ENCODE measurements at regions of chr13 and their contacts with region 1.

Region 1: GRCh38 chr13:37602747-37603381 is 4.3 kb upstream of the POSTN start:
- DNase-seq: no peak
- ATAC-seq: peak; percentile 55 to 56
- H3K4me3 ChIP-seq: no peak overlapping the region
- H3K27ac ChIP-seq: no peak overlapping the region
- H3K4me1 ChIP-seq: peaks cover 1% of the 10 kb centered on the region
- H3K27me3 ChIP-seq: no peaks in the 10 kb centered on the region

Region 2: GRCh38 chr13:37074703-37075102 is 528.2 kb before region 1 on chr13:
- intact Hi-C with region 1: loop called in 3 of 4 experiments (anchors 10 kb)
- DNase-seq: no peak
- ATAC-seq: peak in 1 of 2 donors; percentile 55
- H3K4me3 ChIP-seq: no peak overlapping the region
- H3K27ac ChIP-seq: no peak overlapping the region
- H3K4me1 ChIP-seq: no peaks in the 10 kb centered on the region
- H3K27me3 ChIP-seq: no peaks in the 10 kb centered on the region

Region 3: DNA sequence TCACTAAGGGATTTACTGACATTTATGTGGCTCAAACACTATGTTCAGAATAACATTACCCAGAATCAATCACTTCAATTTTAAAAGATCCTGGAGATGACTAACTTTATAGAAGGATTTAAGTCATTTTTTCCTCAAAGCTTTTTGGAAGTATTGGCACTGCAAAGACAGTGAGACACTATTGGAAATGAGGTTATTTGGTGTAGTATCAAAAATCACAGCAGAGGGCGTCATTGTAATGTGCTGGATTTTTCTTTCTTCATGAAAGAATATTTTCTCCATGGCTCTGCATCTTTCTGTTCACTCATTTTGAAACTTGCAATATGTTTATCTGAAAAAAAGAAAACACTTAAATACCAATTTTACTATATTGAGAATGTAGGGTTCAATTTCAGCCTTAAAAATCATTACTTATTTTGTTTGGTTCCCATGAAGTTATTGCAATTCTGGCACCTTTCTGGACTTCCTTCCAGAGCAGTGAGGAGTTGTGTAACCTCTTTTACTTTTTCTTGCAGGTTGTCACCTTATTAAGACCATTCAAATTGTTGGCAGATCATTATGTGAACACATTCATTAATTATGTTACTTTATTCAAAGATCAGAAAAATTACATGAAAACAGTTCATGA is 493.7 kb before region 1 on chr13:
- intact Hi-C with region 1: loop called (anchors 2 to 10 kb)
- DNase-seq: no peak
- ATAC-seq: peak; percentile 65 to 74
- H3K4me3 ChIP-seq: no peak overlapping the region
- H3K27ac ChIP-seq: no peak overlapping the region
- H3K4me1 ChIP-seq: peaks cover 2% of the 10 kb centered on the region
- H3K27me3 ChIP-seq: no peaks in the 10 kb centered on the region

Region 4: GRCh38 chr13:37510441-37510840 is 92.4 kb before region 1 on chr13:
- intact Hi-C with region 1: no loop called
- DNase-seq: no peak
- ATAC-seq: no peak
- H3K4me3 ChIP-seq: no peak overlapping the region
- H3K27ac ChIP-seq: no peak overlapping the region
- H3K4me1 ChIP-seq: no peaks in the 10 kb centered on the region
- H3K27me3 ChIP-seq: no peaks in the 10 kb centered on the region